K562 (cell line): ENCODE measurements at regions of chr3 and their contacts with region 1.

Region 1: DNA sequence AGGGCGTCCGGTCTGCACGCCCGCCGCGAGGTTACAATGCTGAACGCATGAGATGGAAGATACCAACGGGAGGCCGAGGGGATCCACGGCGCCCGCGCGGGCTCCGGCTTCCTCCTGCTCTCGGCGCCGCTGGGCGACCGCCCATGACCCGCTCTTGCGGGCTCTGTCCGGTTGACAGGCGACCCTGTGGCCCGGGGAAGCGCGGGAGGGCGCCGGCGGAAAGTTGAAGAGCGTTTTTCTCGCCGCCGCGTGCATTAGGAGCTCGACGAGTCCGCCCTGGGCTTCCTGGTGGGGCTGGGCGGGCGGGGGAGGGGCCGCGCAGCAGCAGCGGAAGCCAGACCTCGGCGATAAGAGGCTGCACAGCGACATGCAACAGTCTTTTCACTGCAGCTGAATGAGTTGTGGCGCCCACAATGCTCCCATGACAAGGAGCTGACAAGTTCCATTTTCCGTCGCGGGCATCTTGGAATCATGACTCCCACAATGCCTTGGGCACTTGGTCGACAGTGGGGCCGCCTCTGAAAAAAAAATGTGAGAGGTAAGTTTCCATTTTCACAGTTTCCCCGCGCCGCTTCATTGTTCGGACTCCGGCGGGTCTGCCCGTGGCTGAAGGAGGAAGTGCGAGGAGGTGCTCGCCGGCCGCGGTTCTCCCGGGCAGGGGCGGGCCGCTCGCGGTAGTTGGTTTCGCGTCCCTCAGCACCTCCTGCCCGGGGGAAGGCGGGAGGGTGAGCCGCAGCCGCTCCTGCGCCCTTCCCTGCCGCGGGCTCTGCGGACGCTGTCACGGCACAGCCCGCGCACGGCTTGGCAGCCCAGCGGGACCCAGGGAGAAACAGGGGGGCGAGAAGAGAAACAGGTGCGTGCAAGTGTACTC is at the start of gene MBNL1:
- DNase-seq: peak; percentile 70 to 95 (median 79)
- ATAC-seq: peak; percentile 43
- H3K4me3 ChIP-seq: peak within 1 kb of the TSS; percentile 75
- H3K27ac ChIP-seq: peak within 1 kb of the TSS; percentile 96
- H3K4me1 ChIP-seq: peaks cover 8 to 22% of the 10 kb centered on the region in 2 experiments; a peak in 4 of 5 replicates
- H3K27me3 ChIP-seq: no peaks in the 10 kb centered on the region
- CTCF ChIP-seq: peak in 1 of 3 experiments; percentile 7; a peak in 1 of 6 replicates
- EP300 ChIP-seq: peak; percentile 65; the same call in 1 of the 2 replicates
- POLR2A ChIP-seq: peak; percentile 93
- RAD21 ChIP-seq: peak in 1 of 2 experiments; percentile 13; a peak in 2 of 4 replicates
- polyA plus RNA-seq, gene MBNL1: 70.3 to 87.3 TPM

Region 2: GRCh38 chr3:150603153-150603979 is 1665.4 kb before region 1 on chr3 and contains the start of gene SELENOT:
- CTCF ChIA-PET with region 1: no interaction called
- POLR2A ChIA-PET with region 1: no interaction called
- in situ Hi-C with region 1: no loop called
- intact Hi-C with region 1: loop called (anchors 10 kb)
- DNase-seq: peak; percentile 97 to 98 (median 98)
- ATAC-seq: peak; percentile 82
- H3K4me3 ChIP-seq: peak within 1 kb of the TSS; percentile 94
- H3K27ac ChIP-seq: peak within 1 kb of the TSS; percentile 84
- H3K4me1 ChIP-seq: peaks cover 16 to 40% of the 10 kb centered on the region in 2 experiments
- H3K27me3 ChIP-seq: no peaks in the 10 kb centered on the region
- CTCF ChIP-seq: peak in 2 of 3 experiments; percentile 36 to 48; a peak in 3 of 6 replicates
- EP300 ChIP-seq: no peak; the same call in 1 of the 2 replicates
- POLR2A ChIP-seq: peak; percentile 98
- RAD21 ChIP-seq: peak in 1 of 2 experiments; percentile 32; a peak in 3 of 4 replicates
- polyA plus RNA-seq, gene SELENOT: 261 to 317 TPM

Region 3: DNA sequence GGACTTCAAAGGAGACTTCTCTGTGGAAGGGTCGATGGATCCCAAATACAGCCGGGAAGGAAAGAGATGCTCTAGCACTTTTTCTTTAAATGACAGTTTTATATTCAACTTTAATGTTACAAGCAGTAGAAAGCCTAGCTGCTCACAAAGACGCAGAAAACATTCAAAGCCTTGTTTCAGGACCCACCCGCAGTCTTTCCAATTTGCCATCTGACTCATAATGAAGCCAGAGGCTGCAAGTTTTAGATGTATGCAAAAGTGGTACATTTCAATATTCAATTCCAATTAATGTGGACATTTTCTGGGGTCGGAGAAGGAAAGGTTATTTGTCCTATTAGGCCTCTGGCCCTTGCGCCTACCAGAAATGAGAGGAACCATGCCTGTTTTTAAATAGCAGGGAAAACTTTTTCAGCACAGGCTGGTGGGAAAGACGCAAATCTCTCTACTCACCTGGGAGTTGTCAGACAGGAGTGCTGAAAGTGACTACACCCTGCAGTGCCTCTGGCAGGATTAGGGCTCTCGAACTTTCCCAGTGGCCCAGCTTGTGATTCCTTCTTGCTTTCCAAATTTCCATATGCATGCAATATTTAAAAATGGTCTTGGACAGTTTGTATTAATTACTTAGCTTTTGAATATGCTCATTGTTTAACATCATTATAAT is 117.4 kb before region 1 on chr3:
- CTCF ChIA-PET with region 1: no interaction called
- POLR2A ChIA-PET with region 1: no interaction called
- in situ Hi-C with region 1: no loop called
- intact Hi-C with region 1: no loop called
- DNase-seq: no peak
- ATAC-seq: no peak
- H3K4me3 ChIP-seq: no peak overlapping the region
- H3K27ac ChIP-seq: no peak overlapping the region
- H3K4me1 ChIP-seq: no peaks in the 10 kb centered on the region
- H3K27me3 ChIP-seq: no peaks in the 10 kb centered on the region
- CTCF ChIP-seq: no peak
- EP300 ChIP-seq: no peak
- POLR2A ChIP-seq: no peak
- RAD21 ChIP-seq: no peak

Region 4: DNA sequence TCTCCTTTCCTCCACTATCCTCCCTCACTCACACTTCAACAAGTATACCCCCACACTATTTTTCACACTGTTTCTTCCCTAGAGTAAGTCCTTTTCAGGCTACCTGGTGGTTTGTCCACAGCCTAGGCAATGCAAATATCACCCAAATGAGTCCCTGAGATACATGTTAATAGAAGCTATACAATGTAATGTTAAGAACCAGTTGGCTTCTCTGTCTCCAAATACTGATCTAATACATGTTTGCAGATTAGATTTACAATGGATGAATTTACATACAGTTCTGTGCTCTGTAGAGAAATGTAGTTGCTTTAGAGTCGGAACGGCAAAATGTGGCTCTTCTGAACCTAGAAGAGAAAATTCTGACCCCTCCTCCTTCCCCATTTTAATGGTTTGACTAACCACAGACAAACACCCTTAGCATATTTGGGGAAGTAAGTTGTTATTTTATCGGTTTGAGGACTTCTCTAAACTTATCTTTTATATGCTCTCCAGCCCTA is 63.6 kb before region 1 on chr3:
- CTCF ChIA-PET with region 1: no interaction called
- POLR2A ChIA-PET with region 1: interaction called, 4 read pairs
- in situ Hi-C with region 1: no loop called
- intact Hi-C with region 1: loop called (anchors 1 kb)
- DNase-seq: peak in 1 of 4 experiments; percentile 61
- ATAC-seq: peak; percentile 68
- H3K4me3 ChIP-seq: peak overlapping the region; percentile 36
- H3K27ac ChIP-seq: peak overlapping the region; percentile 84
- H3K4me1 ChIP-seq: peaks cover 8 to 20% of the 10 kb centered on the region in 2 experiments
- H3K27me3 ChIP-seq: no peaks in the 10 kb centered on the region
- CTCF ChIP-seq: no peak
- EP300 ChIP-seq: peak; percentile 48; the same call in 1 of the 2 replicates
- POLR2A ChIP-seq: no peak
- RAD21 ChIP-seq: no peak

Region 5: GRCh38 chr3:152257563-152258035 is 11.2 kb before region 1 on chr3:
- CTCF ChIA-PET with region 1: no interaction called
- POLR2A ChIA-PET with region 1: interaction called, 19 read pairs
- in situ Hi-C with region 1: no loop called
- intact Hi-C with region 1: no loop called
- DNase-seq: no peak
- ATAC-seq: no peak
- H3K4me3 ChIP-seq: no peak overlapping the region
- H3K27ac ChIP-seq: peak overlapping the region; percentile 33; the same call in 1 of the 3 replicates
- H3K4me1 ChIP-seq: peaks cover 5 to 42% of the 10 kb centered on the region in 2 experiments
- H3K27me3 ChIP-seq: no peaks in the 10 kb centered on the region
- CTCF ChIP-seq: no peak
- EP300 ChIP-seq: no peak
- POLR2A ChIP-seq: no peak
- RAD21 ChIP-seq: no peak

Region 6: DNA sequence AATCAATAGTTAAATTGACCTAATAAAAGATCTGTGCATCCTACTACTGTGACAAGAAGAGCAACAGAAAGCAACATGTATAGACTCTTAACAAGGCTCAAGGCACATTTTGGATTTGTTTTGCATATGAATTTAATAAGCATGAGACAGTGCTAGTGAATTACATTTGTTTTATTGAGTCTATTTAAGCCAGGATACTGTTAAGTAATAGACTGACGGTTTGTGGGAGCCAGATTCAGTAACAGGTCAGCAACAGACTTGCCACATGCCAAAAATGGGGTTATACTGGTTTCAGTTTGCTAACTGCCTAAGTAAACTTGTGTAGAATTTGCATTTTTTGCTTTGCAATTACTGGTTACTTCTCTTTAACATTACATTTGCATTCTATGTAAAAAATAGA is 54.0 kb after region 1 on chr3:
- CTCF ChIA-PET with region 1: no interaction called
- POLR2A ChIA-PET with region 1: no interaction called
- in situ Hi-C with region 1: no loop called
- intact Hi-C with region 1: loop called (anchors 5 kb)
- DNase-seq: no peak
- ATAC-seq: no peak
- H3K4me3 ChIP-seq: no peak overlapping the region
- H3K27ac ChIP-seq: peak overlapping the region; percentile 20; the same call in 1 of the 3 replicates
- H3K4me1 ChIP-seq: peaks cover 12 to 47% of the 10 kb centered on the region in 2 experiments
- H3K27me3 ChIP-seq: no peaks in the 10 kb centered on the region
- CTCF ChIP-seq: no peak
- EP300 ChIP-seq: no peak
- POLR2A ChIP-seq: no peak
- RAD21 ChIP-seq: no peak

Region 7: DNA sequence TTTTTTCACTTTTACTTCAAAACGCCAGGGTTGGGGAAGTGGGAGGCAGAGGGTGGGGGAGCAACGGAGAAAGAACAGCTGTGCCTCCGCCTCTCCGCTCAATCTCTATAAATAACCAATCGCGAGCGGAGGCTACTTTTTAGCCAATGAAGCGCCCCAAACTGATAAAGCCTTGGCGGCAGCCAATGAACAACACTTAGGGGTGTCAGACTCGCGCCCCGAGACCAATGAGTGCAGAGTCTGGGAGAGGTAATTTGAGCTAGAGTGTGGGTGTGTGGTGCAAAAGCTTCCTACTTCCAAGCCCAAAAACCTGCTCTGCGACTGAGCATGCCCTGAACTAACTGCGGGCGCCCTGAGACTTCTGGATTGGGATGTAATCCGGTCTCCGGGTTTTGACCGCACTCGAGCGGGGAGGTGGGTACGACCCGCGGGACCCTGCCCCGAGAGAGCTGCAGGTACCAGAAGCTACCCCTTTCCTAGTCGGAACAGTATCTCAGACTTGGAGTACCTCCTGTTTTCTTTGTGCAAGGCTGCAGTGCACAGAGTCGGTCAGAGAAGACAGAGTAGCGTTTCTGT is 892.4 kb after region 1 on chr3:
- CTCF ChIA-PET with region 1: no interaction called
- POLR2A ChIA-PET with region 1: no interaction called
- in situ Hi-C with region 1: no loop called
- intact Hi-C with region 1: loop called (anchors 10 kb)
- DNase-seq: peak; percentile 94 to 98 (median 98)
- ATAC-seq: peak; percentile 83
- H3K4me3 ChIP-seq: peak overlapping the region; percentile 88
- H3K27ac ChIP-seq: peak overlapping the region; percentile 84
- H3K4me1 ChIP-seq: peaks cover 6 to 24% of the 10 kb centered on the region in 2 experiments; a peak in 3 of 5 replicates
- H3K27me3 ChIP-seq: no peaks in the 10 kb centered on the region
- CTCF ChIP-seq: no peak
- EP300 ChIP-seq: no peak
- POLR2A ChIP-seq: no peak
- RAD21 ChIP-seq: no peak